ENCODE measurements at regions of chr20 and their contacts with region 1.

Region 1: DNA sequence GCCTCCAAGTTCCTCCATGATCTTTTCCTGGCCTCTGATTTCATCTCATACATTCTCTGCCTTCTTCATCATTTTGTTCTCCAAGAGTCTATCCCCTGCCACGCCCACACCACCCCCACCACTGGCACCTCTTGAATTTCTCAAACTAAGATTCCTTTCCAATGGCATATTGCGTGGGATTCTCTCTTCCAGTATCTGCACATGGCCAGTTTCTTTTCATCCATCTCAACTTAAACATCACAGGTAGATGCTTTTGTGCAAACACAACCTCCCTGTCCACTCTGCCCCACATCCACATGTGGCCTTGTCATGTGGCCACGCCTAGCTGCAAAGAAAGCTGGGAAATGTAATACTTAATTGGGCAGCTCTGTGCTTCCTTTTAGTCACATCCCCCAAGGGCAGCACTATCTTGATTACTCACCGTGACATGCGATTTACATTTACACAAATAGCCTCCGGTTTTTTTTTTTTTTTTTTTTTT is 33.4 kb upstream of the ZMYND8 start:
- DNase-seq: no peak
- H3K4me3 ChIP-seq: no peak overlapping the region
- H3K4me3 Mint-ChIP-seq: no peak overlapping the region
- H3K27ac ChIP-seq: no peak overlapping the region
- H3K27ac Mint-ChIP-seq: no peak overlapping the region
- H3K4me1 ChIP-seq: no peaks in the 10 kb centered on the region
- H3K4me1 Mint-ChIP-seq: no peaks in the 10 kb centered on the region
- H3K27me3 ChIP-seq: no peaks in the 10 kb centered on the region
- H3K27me3 Mint-ChIP-seq: no peaks in the 10 kb centered on the region

Region 2: DNA sequence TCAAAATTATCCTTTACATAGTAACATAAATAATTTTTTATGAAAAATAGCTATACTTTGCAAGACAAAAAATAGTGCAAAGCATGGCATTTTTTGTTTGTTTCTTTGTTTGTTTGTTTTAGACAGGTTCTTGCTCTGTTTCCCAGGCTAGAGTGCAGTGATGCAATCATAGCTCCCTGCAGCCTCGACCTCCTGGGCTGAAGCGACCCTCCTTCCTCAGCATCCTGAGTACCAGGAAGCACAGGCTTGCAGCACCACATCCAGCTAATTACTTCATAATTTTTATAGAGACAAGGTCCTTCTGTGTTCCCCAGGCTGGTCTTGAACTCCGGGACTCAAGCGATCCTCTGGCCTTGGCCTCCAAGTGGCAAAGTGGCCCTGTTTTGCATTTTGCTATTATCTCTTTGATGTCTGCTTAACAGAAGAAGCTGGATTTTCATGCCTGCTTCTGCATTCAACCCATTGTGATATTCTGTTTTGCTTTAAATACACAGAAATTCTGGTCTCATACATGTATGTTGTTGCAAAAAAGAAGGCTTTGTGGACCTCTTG is 15.9 kb after region 1 on chr20:
- CTCF ChIA-PET with region 1: interaction called, 19 read pairs
- POLR2A ChIA-PET with region 1: no interaction called
- intact Hi-C with region 1: no loop called
- DNase-seq: no peak
- H3K4me3 ChIP-seq: no peak overlapping the region
- H3K4me3 Mint-ChIP-seq: no peak overlapping the region
- H3K27ac ChIP-seq: no peak overlapping the region
- H3K27ac Mint-ChIP-seq: no peak overlapping the region
- H3K4me1 ChIP-seq: no peaks in the 10 kb centered on the region
- H3K4me1 Mint-ChIP-seq: no peaks in the 10 kb centered on the region
- H3K27me3 ChIP-seq: no peaks in the 10 kb centered on the region
- H3K27me3 Mint-ChIP-seq: no peaks in the 10 kb centered on the region

Measured in CD4-positive, alpha-beta memory T cell (primary cell).